ENCODE measurements at regions of chr3 and their contacts with region 1.

Region 1: GRCh38 chr3:56682462-56683121 is 473 bp downstream of the TASOR start:
- DNase-seq: peak; percentile 82 to 86 (median 84)
- ATAC-seq: peak; percentile 83
- H3K4me3 ChIP-seq: peak overlapping the region; percentile 90
- H3K4me1 ChIP-seq: peaks cover 12% of the 10 kb centered on the region
- CTCF ChIP-seq: no peak

Region 2: GRCh38 chr3:56633602-56634535 is 48.7 kb before region 1 on chr3:
- intact Hi-C with region 1: loop called in 1 of 2 experiments (anchors 10 kb)
- DNase-seq: no peak
- ATAC-seq: no peak
- H3K4me3 ChIP-seq: no peak overlapping the region
- H3K4me1 ChIP-seq: no peaks in the 10 kb centered on the region
- CTCF ChIP-seq: no peak

Region 3: GRCh38 chr3:57078344-57078634 is 395.7 kb after region 1 on chr3:
- intact Hi-C with region 1: no loop called
- DNase-seq: peak; percentile 65 to 73 (median 71)
- ATAC-seq: peak; percentile 78
- H3K4me3 ChIP-seq: peak overlapping the region; percentile 44
- H3K4me1 ChIP-seq: peaks cover 4% of the 10 kb centered on the region
- CTCF ChIP-seq: no peak